Pancreas (tissue), 10 donors: ENCODE measurements at regions of chrX and their contacts with region 1.

Region 1: DNA sequence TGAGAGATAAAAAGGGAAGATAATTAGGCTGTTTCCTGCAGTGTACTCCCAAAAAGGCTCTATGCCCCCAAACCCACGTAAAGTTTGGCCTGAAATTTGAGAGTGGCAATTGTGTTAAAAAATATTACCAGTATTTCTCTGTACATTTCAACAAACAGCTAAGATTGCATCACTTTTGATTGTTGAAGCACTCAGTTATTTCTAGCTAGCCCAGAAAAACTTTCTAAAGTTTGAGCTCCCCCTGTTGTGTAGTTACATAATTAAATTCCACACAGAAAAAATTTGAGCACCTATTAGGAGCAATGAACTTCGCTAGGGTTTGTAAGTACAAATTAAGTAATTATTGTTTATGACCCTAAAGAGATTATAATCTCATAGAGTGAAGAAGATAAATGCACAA is 109.4 kb downstream of the DLG3 start:
- DNase-seq: no peak
- ATAC-seq: peak; percentile 71 to 85 (median 80)
- H3K4me3 ChIP-seq: no peak overlapping the region
- H3K27ac ChIP-seq: peak overlapping the region in 2 of 4 donors; percentile 30 to 34
- H3K4me1 ChIP-seq: peaks cover 3 to 14% (median 13%) of the 10 kb centered on the region in 3 donors
- H3K27me3 ChIP-seq: no peaks in the 10 kb centered on the region
- CTCF ChIP-seq: no peak

Region 2: DNA sequence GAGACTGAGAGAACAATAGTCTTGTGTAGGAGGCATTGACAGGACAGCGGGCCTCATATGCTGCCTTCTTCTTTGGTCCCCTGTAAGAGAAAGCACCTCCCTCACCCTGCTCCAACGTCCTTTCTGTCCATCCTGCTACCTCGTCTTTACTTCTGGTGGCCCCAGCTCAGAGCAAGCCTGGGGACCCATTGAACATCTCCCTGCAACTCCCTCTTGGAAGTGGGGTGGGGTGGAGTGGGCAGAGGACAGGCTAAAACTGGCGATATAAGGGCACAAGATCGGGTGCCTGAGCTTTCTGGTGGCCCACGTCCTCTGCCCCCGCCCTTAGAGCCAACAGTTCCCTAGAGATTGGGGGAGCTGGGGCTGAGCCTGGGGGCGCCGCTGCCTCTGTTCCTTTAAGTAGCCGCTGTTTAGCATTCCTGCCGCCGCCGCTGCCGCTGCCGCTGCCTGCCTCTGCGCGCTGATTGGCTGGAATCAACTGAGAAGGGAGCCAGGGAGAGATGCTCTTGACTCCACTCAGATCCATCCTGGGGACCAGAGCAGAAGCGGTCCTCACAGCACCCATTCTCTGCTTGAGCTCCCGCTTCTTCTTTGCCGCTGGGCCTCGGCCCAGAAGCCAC is 109.6 kb before region 1 on chrX and contains the start of gene DLG3:
- intact Hi-C with region 1: loop called in 1 of 3 experiments (anchors 10 kb)
- DNase-seq: peak in 1 of 6 donors; percentile 69
- ATAC-seq: peak; percentile 21 to 68 (median 52)
- H3K4me3 ChIP-seq: peak within 1 kb of the TSS in 2 of 4 donors; percentile 20 to 33
- H3K27ac ChIP-seq: no peak within 1 kb of the TSS
- H3K4me1 ChIP-seq: no peaks in the 10 kb centered on the region
- H3K27me3 ChIP-seq: peaks cover 0 to 11% (median 0%) of the 10 kb centered on the region in 4 donors
- CTCF ChIP-seq: no peak
- total RNA-seq, gene DLG3: 35.3 to 55.7 (median 47.1) TPM